ENCODE measurements at regions of chr18 and their contacts with region 1.

Region 1: DNA sequence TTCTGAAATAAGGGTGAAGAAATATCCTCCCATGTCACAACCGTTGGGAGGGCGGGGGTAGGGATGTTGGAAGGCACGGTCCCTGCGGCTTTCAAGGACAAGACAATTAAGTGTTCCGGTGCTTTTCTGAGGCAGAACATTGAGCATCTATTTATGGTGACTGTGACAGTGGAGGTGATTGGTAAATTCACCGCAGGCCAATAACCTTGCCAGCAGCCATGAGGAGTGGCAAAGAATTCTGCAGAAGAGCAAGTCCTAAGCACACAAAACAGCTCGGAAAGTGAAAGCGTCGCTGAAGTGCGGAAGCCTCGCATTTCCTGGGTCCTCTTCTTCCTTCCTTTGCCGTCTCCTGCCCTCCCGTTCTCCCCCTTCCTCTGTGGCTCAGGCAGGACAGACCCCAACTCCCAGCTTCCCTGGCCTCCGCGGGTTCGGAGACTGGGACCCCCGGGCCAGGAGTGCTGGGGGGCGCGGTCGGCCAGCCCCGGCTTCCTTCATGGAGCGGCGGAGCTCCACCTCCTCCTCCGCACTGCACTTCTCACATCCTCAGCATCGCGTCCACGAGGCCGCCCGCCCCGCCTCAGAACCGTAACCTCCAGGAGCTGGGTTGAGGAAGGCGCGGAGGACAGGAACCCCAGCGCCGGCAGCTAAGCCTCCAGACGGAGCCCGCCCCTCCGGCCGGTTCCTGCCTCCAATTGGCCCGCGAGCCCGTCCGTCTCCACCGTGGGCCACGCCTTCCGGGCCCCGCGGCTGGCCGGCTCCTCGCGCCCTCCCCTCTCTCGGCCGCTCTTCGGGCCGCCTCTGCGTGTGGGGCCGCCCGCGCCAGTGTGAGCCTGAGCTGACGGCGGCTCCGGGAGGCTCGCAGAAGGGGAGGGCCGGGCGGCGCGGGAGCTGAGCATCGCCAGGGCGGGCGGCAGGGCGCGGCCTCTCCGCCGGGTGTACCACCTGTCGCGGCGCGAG is at the start of gene ME2:
- DNase-seq: peak; percentile 68 to 95
- H3K4me3 ChIP-seq: peak within 1 kb of the TSS; percentile 88 to 92
- H3K27ac ChIP-seq: peak within 1 kb of the TSS; percentile 87 to 92
- H3K4me1 ChIP-seq: peaks cover 6% of the 10 kb centered on the region in 2 donors
- H3K27me3 ChIP-seq: no peaks in the 10 kb centered on the region
- CTCF ChIP-seq: no peak
- total RNA-seq, gene ME2: 27.4 TPM

Region 2: DNA sequence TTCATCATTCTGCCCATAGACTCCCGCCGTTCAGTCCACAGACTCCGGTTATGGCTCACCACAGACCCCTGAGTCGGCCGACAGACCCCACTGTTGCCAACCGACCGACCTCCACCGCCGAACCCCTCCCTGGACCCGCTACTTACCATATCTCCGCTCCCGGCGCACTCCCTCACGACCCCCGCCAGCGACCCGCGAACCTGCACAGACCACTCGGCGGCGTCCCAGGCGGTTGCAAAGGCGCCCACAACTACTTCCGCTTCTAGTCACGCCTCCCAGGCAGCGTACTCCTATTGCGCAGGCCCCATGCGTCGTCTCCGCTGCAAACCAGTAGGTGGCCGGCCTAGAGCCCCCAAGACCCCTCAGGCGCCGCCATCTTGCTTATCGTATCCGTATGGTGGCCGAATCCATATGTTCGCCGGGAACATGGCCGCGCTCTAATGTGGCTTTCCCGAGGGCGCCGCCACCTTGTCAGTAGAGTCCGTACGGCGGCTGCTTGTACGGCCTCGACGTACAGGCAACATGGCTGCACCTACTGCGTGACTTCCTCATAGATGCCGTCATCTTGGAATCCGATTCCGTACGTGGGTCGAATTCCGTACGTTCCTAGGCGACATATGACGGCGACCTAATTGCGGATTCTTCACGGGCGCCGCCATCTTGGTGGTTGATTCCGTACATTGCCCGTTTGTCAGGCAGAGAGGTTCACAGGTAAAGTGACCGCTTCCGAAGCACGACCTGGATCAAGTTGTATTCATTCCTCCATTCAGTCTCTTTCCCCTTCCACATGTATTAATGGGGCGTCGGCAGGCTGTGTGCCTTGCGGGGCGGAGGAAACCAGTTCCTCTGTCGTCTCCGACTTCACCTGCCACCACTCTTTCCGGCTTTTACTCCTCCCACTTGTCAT is 590.9 kb before region 1 on chr18 and contains the start of gene CXXC1:
- intact Hi-C with region 1: loop called (anchors 10 kb)
- DNase-seq: peak; percentile 94 to 99
- H3K4me3 ChIP-seq: peak within 1 kb of the TSS; percentile 68 to 80
- H3K27ac ChIP-seq: peak within 1 kb of the TSS; percentile 83 to 88
- H3K4me1 ChIP-seq: no peaks in the 10 kb centered on the region
- H3K27me3 ChIP-seq: no peaks in the 10 kb centered on the region
- CTCF ChIP-seq: peak; percentile 35 to 69 (median 46)
- total RNA-seq, gene CXXC1: 171 TPM

Region 3: GRCh38 chr18:50726960-50727589 is 151.5 kb before region 1 on chr18:
- intact Hi-C with region 1: no loop called
- DNase-seq: no peak
- H3K4me3 ChIP-seq: no peak overlapping the region
- H3K27ac ChIP-seq: no peak overlapping the region
- H3K4me1 ChIP-seq: peaks cover 0 to 4% of the 10 kb centered on the region in 2 donors
- H3K27me3 ChIP-seq: no peaks in the 10 kb centered on the region
- CTCF ChIP-seq: no peak

Region 4: GRCh38 chr18:50819728-50820378 is 58.8 kb before region 1 on chr18 and contains the start of gene MRO:
- intact Hi-C with region 1: loop called (anchors 5 kb)
- DNase-seq: peak; percentile 49 to 88
- H3K4me3 ChIP-seq: peak within 1 kb of the TSS; percentile 42 to 55
- H3K27ac ChIP-seq: no peak within 1 kb of the TSS
- H3K4me1 ChIP-seq: peaks cover 0 to 6% of the 10 kb centered on the region in 2 donors
- H3K27me3 ChIP-seq: no peaks in the 10 kb centered on the region
- CTCF ChIP-seq: peak; percentile 82 to 94 (median 85)
- total RNA-seq, gene MRO: 1.4 TPM

Region 5: GRCh38 chr18:50967714-50968661 is 89.4 kb after region 1 on chr18 and contains the start of gene ELAC1:
- intact Hi-C with region 1: loop called (anchors 1 kb)
- DNase-seq: peak; percentile 10 to 87
- H3K4me3 ChIP-seq: peak within 1 kb of the TSS; percentile 87 to 89
- H3K27ac ChIP-seq: peak within 1 kb of the TSS; percentile 96 to 98
- H3K4me1 ChIP-seq: peaks cover 0 to 7% of the 10 kb centered on the region in 2 donors
- H3K27me3 ChIP-seq: no peaks in the 10 kb centered on the region
- CTCF ChIP-seq: no peak
- total RNA-seq, gene ELAC1: not detected

Region 6: DNA sequence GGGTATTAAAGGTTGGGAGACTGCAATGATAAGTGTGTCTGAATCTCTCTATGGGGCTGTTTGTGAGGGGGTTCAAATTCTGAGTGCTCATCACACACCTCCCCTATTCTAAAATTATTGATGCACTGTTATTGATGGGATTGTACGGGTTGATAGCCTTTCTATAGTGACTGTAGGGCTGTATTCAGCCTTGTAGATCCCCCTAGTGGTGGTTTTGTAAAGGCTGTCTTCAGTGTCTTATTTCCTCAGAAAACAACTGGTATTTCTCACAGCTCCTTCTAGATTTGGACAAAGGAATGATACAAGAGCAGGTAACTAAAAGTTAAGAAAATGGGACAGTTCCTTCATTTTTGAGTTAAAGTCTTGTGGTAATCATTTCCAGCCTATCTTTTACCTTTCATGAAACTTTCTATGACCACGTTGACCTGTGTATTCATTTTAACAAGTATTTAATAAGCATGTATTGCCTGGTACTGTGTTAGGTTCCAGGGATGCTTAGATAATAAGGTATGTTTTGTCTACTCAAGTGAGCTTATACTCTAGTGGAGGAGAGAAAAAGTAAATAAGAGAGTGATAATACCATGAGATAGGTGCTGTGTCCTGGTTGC is 172.6 kb after region 1 on chr18:
- intact Hi-C with region 1: loop called (anchors 5 kb)
- DNase-seq: no peak
- H3K4me3 ChIP-seq: no peak overlapping the region
- H3K27ac ChIP-seq: no peak overlapping the region
- H3K4me1 ChIP-seq: no peaks in the 10 kb centered on the region
- H3K27me3 ChIP-seq: no peaks in the 10 kb centered on the region
- CTCF ChIP-seq: peak; percentile 49 to 76 (median 65)